GM10248 (cell line): ENCODE measurements at regions of chr5 and their contacts with region 1.

Region 1: DNA sequence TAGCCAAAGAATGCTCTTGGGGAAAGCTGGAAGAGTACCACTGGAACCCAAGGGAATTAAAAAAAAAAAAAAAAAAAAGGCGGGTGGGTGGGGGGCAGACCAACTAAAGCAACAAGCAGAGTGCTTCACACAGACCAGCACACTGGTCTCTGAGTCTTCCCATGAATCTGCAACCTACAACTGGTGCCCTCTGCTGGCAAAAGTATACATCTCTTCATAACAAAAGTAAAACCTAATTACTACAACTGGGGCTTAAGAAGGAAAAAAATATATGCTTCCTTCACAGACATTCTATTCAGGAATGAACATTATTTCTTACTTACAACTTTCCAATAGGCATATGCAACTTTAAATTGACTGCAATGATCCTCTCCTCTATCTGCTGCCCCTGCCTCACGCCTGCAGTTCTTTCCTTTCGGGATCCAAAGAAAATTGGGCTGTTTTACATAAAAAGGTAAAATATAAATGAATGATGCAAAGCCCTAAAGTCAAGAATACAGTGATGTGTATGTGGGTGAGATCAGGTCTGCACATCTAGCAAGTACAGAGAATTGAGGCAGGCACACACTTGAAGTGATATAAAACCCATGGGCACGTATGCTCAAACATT is 7.2 kb upstream of the KLHL3 start:
- DNase-seq: peak; percentile 53
- CTCF ChIP-seq: peak; percentile 65

Region 2: DNA sequence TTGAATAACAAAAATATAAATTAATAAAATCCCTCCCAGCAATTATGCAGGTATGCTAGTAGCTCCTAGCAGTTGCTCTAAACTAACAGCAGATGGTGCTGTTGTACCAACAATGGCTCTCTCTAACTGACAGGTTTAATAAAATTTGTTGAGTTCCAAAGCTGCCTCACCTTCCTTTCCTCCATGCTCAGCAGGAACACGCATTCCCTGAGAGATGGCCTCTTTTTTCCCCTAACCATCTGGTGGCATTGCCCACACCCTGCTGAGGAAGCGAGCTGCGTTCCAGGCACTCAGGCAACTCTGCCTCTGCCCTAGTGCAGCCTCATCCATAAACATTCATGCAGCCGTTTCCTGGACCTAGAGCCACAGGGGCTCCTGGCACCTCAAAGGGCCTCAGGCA is 113.5 kb before region 1 on chr5:
- CTCF ChIA-PET with region 1: interaction called, 148 read pairs
- POLR2A ChIA-PET with region 1: no interaction called
- DNase-seq: peak; percentile 82
- CTCF ChIP-seq: peak; percentile 72

Region 3: GRCh38 chr5:137665678-137666460 is 77.3 kb before region 1 on chr5:
- CTCF ChIA-PET with region 1: interaction called, 292 read pairs
- POLR2A ChIA-PET with region 1: interaction called, 7 read pairs
- DNase-seq: peak; percentile 62
- CTCF ChIP-seq: no peak

Region 4: GRCh38 chr5:137730336-137730735 is 12.8 kb before region 1 on chr5:
- CTCF ChIA-PET with region 1: interaction called, 20 read pairs
- POLR2A ChIA-PET with region 1: no interaction called
- DNase-seq: no peak
- CTCF ChIP-seq: no peak